A549 (cell line): ENCODE measurements at regions of chr10 and their contacts with region 1.

Region 1: GRCh38 chr10:80144067-80144695 is 11.7 kb downstream of the PLAC9 start:
- DNase-seq: peak in 1 of 2 experiments; percentile 37
- ATAC-seq: peak; percentile 70 to 78
- H3K4me3 ChIP-seq: peak overlapping the region; percentile 33
- H3K27ac ChIP-seq: peak overlapping the region in 1 of 2 experiments; percentile 67; a peak in 4 of 6 replicates
- H3K4me1 ChIP-seq: peaks cover 3% of the 10 kb centered on the region; the same call in 1 of the 3 replicates
- CTCF ChIP-seq: no peak
- EP300 ChIP-seq: no peak
- POLR2A ChIP-seq: no peak
- RAD21 ChIP-seq: peak in 1 of 2 experiments; percentile 33; a peak in 2 of 5 replicates

Region 2: GRCh38 chr10:80158598-80159127 is 14.5 kb after region 1 on chr10:
- CTCF ChIA-PET with region 1: interaction called, 55 read pairs
- POLR2A ChIA-PET with region 1: no interaction called
- DNase-seq: peak; percentile 75 to 81
- ATAC-seq: peak; percentile 89 to 91
- H3K4me3 ChIP-seq: no peak overlapping the region
- H3K27ac ChIP-seq: peak overlapping the region; percentile 22 to 79; a peak in 5 of 6 replicates
- H3K4me1 ChIP-seq: peaks cover 26% of the 10 kb centered on the region
- CTCF ChIP-seq: no peak
- EP300 ChIP-seq: no peak
- POLR2A ChIP-seq: no peak
- RAD21 ChIP-seq: 0 out of 5 replicates have a peak, but pooled peaks have one; percentile 8 to 12

Region 3: DNA sequence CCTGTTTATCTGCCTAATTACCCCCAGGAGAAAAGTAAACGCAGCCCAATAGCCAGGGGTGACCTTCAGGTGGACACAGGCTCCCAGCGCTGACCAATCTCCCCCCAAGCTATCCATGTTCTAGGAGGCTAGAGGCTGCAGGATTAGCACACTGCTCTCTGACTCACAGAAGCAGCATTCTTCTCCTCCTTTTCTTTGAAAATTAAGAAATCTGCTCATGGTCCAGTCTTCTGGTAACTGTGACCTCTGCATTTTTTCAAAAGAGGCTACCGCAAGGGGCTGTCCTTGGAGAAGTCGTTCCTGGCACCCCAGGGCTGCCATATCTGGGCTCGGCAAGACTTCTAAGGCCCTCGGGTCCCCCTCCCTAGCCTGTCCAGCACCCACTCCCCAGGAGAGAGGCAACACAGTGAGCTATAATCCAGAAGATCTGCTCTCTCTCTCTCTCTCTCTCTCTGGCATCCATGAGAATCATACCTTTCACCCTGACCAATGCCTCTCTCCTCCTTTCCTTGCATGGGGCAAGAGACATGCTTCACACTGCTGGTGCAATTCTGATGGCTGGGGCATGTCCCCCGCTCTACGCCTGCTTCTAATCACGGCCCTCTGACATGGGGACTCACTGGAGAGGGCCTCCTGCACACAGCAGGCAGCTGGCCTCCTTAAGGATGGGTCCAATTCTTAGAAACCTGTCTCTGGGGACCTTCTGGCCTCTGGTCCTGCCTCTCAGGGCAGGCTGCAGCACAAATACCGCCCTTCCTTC is 33.8 kb after region 1 on chr10:
- CTCF ChIA-PET with region 1: interaction called, 16 read pairs
- POLR2A ChIA-PET with region 1: no interaction called
- DNase-seq: no peak
- ATAC-seq: peak; percentile 17 to 38; a peak in 2 of 6 replicates
- H3K4me3 ChIP-seq: no peak overlapping the region
- H3K27ac ChIP-seq: peak overlapping the region in 1 of 2 experiments; percentile 44; a peak in 1 of 6 replicates
- H3K4me1 ChIP-seq: peaks cover 8% of the 10 kb centered on the region; the same call in 1 of the 3 replicates
- CTCF ChIP-seq: no peak
- EP300 ChIP-seq: no peak
- POLR2A ChIP-seq: no peak
- RAD21 ChIP-seq: no peak

Region 4: DNA sequence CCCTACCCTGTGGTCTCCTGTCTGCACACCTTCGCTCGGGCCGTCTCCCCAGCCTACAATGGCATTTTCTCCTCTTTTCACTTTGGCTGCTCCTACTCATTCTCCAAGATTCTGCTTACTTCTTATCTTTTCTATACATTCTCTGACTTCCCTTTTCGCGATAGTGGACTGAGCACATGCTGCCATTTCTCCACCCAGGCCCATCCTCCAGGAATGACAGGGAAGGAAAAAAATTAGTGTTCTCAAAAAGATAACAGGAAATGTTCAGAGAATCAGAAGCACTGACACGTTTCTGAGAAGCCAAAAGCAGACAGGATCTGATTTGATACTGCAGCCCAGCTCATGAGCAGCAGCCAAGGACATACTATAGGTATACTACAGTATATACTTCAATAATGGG is 67.6 kb after region 1 on chr10:
- CTCF ChIA-PET with region 1: interaction called, 26 read pairs
- POLR2A ChIA-PET with region 1: interaction called, 15 read pairs
- DNase-seq: no peak
- ATAC-seq: no peak
- H3K4me3 ChIP-seq: no peak overlapping the region
- H3K27ac ChIP-seq: no peak overlapping the region
- H3K4me1 ChIP-seq: peaks cover 18% of the 10 kb centered on the region
- CTCF ChIP-seq: no peak
- EP300 ChIP-seq: no peak
- POLR2A ChIP-seq: no peak
- RAD21 ChIP-seq: no peak